ENCODE measurements at regions of chr6 and their contacts with region 1.

Region 1: GRCh38 chr6:166989427-166990032 is 9.7 kb upstream of the CEP43 start:
- DNase-seq: no peak
- H3K4me3 ChIP-seq: no peak overlapping the region
- H3K27ac ChIP-seq: no peak overlapping the region
- H3K4me1 ChIP-seq: peaks cover 0 to 6% (median 0%) of the 10 kb centered on the region in 4 donors
- H3K27me3 ChIP-seq: no peaks in the 10 kb centered on the region
- CTCF ChIP-seq: peak; percentile 27 to 52 (median 37)
- EP300 ChIP-seq: no peak
- POLR2A ChIP-seq: no peak

Region 2: DNA sequence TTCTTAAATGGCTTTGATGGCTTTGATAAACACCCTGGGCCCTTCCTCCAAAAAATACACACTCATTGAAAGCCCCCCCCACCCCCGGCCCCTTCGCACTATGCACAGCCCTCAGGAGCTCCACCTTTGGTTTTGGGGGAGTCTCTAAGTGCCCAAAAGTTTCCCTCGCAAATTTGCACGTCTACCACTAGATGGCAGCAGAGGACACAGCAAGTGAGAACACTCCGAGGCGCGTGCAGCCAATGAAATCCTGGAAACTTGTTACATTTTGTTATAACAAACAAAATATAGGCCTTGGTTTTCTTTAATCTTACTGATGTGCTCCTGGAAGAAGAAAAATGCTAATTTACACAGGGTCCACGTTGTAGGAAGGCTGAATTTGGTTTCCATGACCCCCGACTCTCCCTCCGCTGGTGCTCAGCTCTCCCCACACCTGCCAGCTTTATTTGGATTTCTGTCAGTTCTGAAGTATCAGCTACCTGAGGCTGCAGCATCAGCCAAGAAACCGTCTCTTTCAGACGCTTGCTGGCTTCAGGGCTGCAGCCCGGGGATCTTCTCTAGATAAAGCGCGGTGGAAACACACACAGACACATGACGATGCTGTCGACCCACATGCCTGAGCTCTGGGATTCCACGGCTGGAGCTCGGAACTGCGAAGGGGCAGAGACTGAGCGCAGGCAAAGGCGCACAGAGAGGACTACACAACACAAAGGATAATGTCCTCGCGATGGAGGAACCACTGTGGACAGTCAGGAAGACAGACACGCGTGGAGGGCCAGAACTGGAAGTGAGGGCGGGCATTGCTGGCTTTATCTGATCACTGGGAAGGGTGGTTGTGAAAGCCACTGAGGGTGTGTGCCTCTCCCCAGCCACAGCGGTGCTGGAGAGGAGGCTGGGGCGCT is 214.1 kb before region 1 on chr6:
- intact Hi-C with region 1: loop called (anchors 2 kb)
- DNase-seq: no peak
- H3K4me3 ChIP-seq: peak overlapping the region in 2 of 4 donors; percentile 21 to 24
- H3K27ac ChIP-seq: no peak overlapping the region
- H3K4me1 ChIP-seq: peaks cover 0 to 11% (median 0%) of the 10 kb centered on the region in 4 donors
- H3K27me3 ChIP-seq: no peaks in the 10 kb centered on the region
- CTCF ChIP-seq: peak; percentile 82 to 89 (median 84)
- EP300 ChIP-seq: no peak
- POLR2A ChIP-seq: no peak

Region 3: DNA sequence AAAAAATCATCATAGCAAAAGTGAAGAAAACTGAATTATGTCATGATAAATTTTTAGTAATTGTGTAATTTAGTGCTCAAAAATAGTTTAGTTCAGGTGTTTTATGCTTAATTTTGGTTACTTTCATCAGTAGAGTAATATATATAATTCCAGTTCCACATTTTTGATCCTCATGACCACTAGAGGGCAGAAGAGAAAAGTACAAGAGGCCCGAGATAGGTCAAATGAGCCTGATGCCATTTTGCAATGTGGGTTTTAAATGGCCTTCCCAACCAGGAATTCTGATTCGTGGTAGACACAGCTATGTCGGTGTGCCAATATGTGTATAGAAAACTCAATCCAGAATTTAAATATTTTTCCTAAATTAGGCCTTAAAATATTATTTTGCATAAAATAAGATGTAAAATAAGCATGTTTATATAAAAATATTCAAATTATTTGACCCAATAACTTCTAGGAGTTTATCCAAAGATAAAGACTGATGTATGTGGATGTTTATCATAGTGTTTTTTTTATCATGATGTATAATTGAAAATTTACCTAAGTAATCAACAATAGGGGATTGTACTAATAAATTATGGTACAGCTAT is 202.7 kb before region 1 on chr6:
- intact Hi-C with region 1: loop called (anchors 5 kb)
- DNase-seq: peak; percentile 50
- H3K4me3 ChIP-seq: no peak overlapping the region
- H3K27ac ChIP-seq: no peak overlapping the region
- H3K4me1 ChIP-seq: no peaks in the 10 kb centered on the region
- H3K27me3 ChIP-seq: no peaks in the 10 kb centered on the region
- CTCF ChIP-seq: peak; percentile 67 to 73 (median 68)
- EP300 ChIP-seq: no peak
- POLR2A ChIP-seq: no peak

Region 4: DNA sequence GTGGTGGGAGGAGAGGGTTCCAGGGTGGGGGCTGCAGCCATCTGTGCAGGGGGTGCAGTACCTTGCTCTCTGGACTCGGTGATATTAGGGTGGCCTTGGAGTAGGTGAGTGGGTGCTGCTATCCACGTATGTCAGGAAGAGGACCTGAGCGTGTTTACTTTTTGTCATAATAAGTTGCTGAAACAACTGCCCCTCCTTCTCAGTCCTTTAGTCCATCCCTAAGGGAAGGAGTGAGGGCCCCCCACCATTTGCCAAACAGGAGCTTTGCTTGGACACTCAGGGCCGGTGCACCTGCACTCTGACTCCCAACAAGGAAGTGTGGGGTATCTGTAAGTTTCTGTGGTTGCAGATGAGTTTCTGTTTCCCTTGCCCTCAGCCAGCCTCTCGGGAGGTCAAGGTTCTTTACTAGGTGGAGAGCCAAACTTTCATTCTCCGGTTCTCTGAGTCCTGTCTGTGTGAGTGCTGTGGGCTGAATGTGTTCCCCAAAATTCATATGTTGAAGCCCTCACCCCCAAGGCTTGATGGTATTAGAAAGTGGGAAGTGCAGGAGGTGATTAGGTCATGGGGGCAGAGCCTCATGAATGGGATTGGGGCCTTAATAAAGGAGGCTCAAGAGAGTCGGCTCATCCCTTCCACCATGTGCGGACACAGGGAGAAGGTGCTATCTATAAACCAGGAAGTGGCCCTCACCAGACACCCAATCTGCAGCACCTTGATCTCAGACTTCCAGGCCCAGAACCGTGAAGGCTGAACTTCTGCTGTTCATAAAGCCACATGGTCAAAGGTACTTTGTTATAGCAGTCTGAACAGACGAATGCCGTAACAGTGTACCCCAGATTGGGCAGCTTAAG is 113.7 kb after region 1 on chr6:
- intact Hi-C with region 1: no loop called
- DNase-seq: no peak
- H3K4me3 ChIP-seq: no peak overlapping the region
- H3K27ac ChIP-seq: no peak overlapping the region
- H3K4me1 ChIP-seq: no peaks in the 10 kb centered on the region
- H3K27me3 ChIP-seq: no peaks in the 10 kb centered on the region
- CTCF ChIP-seq: no peak
- EP300 ChIP-seq: no peak
- POLR2A ChIP-seq: no peak

Measured in esophagus muscularis mucosa (tissue), 4 donors.